GM10248 (cell line): ENCODE measurements at regions of chr14 and their contacts with region 1.

Region 1: GRCh38 chr14:55662752-55663151 is 82.7 kb downstream of the KTN1 start:
- DNase-seq: no peak
- CTCF ChIP-seq: no peak

Region 2: GRCh38 chr14:55354500-55354899 is 308.3 kb before region 1 on chr14:
- CTCF ChIA-PET with region 1: no interaction called
- POLR2A ChIA-PET with region 1: no interaction called
- DNase-seq: peak; percentile 63
- CTCF ChIP-seq: peak; percentile 77

Region 3: GRCh38 chr14:55574988-55575387 is 87.8 kb before region 1 on chr14:
- CTCF ChIA-PET with region 1: no interaction called
- POLR2A ChIA-PET with region 1: no interaction called
- DNase-seq: no peak
- CTCF ChIP-seq: no peak

Region 4: DNA sequence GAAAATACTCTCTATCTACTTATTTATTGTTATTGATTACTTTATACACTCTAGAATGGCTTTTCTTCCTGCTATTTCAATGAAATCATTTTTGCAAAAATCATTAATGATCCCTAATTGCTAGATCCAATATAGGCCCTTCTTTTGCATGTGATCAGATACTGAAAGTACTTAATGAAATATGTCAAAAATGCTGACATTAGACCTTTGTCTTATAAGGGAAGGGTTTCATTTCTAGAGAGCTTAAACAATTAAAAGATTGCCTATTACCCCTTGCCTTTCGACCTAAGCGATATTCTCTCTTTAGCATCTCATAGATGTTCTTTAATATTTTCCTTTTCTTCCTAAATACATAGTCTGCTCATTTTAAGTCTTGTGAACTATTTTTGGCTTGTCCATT is 18.3 kb after region 1 on chr14:
- CTCF ChIA-PET with region 1: interaction called, 13 read pairs
- POLR2A ChIA-PET with region 1: no interaction called
- DNase-seq: no peak
- CTCF ChIP-seq: no peak